Kidney (tissue), 22 donors: ENCODE measurements at regions of chr4 and their contacts with region 1.

Region 1: DNA sequence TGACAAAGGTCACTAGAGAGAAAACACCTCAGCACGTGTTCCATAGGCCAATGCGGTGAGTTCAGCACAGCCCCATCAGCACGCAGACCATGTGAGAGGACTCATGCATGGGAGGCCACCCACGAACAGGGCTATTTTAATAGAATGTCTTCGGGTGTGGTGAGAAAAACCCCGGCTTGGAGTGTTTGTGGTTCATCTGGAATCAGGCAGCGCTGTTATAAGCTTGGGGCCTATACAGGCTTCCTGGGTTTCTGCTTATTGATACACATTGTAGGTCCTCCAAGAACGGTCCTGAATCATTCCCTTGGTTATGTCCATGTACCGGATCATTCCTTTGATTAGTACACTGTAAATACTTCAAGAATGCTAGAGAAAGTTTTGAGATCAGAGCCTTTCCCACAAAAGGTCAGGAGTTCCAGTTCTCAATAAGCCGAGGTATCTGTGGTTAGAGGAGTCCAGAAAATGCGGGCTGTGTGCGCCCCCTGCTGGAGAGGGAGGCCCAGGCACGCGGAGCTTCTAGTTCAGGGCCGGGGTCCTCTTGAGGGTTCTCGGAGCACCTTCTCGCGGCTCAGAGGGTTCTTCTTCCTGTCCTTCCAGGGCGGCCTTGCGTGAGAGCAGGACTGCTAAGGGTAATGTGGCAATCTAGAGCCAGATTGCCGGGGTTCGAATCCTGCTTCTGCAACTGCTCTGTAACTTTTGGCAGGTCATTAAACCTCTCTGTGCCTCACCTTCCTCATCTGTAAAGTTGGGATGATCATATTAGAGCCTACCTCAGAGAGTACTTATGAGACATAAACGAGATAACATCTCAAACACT is 51.8 kb downstream of the TLR10 start:
- DNase-seq: peak; percentile 81 to 91 (median 88)
- H3K4me3 ChIP-seq: no peak overlapping the region
- H3K27ac ChIP-seq: no peak overlapping the region
- H3K4me1 ChIP-seq: no peaks in the 10 kb centered on the region
- H3K27me3 ChIP-seq: no peaks in the 10 kb centered on the region
- CTCF ChIP-seq: peak; percentile 89

Region 2: GRCh38 chr4:38179690-38180377 is 551.2 kb before region 1 on chr4:
- intact Hi-C with region 1: loop called (anchors 2 kb)
- DNase-seq: peak; percentile 78 to 94 (median 91)
- H3K4me3 ChIP-seq: no peak overlapping the region
- H3K27ac ChIP-seq: no peak overlapping the region
- H3K4me1 ChIP-seq: peaks cover 0 to 3% (median 0%) of the 10 kb centered on the region in 3 donors
- H3K27me3 ChIP-seq: no peaks in the 10 kb centered on the region
- CTCF ChIP-seq: peak; percentile 98